K562 (cell line): ENCODE measurements at regions of chr14 and their contacts with region 1.

Region 1: GRCh38 chr14:69789118-69789640 is 7.9 kb downstream of the SLC10A1 start:
- DNase-seq: no peak
- ATAC-seq: no peak
- H3K4me3 ChIP-seq: no peak overlapping the region
- H3K27ac ChIP-seq: no peak overlapping the region
- H3K4me1 ChIP-seq: no peaks in the 10 kb centered on the region
- H3K27me3 ChIP-seq: no peaks in the 10 kb centered on the region
- CTCF ChIP-seq: no peak
- EP300 ChIP-seq: no peak
- POLR2A ChIP-seq: no peak
- RAD21 ChIP-seq: no peak

Region 2: GRCh38 chr14:69779088-69779487 is 10.1 kb before region 1 on chr14:
- CTCF ChIA-PET with region 1: no interaction called
- POLR2A ChIA-PET with region 1: interaction called, 11 read pairs
- in situ Hi-C with region 1: no loop called
- intact Hi-C with region 1: no loop called
- DNase-seq: no peak
- ATAC-seq: peak; percentile 11; the same call in 1 of the 3 replicates
- H3K4me3 ChIP-seq: no peak overlapping the region
- H3K27ac ChIP-seq: no peak overlapping the region
- H3K4me1 ChIP-seq: no peaks in the 10 kb centered on the region; a peak in 1 of 5 replicates
- H3K27me3 ChIP-seq: no peaks in the 10 kb centered on the region
- CTCF ChIP-seq: no peak
- EP300 ChIP-seq: no peak
- POLR2A ChIP-seq: peak; percentile 47; the same call in 1 of the 2 replicates
- RAD21 ChIP-seq: no peak